GM12878 (cell line): ENCODE measurements at regions of chr4 and their contacts with region 1.

Region 1: GRCh38 chr4:10730590-10730989 is 46.0 kb upstream of the CLNK start:
- DNase-seq: peak; percentile 76
- ATAC-seq: peak; percentile 70
- H3K4me3 ChIP-seq: 0 out of 2 replicates have a peak overlapping the region, but pooled peaks have one; percentile 46
- H3K27ac ChIP-seq: peak overlapping the region; percentile 89
- H3K4me1 ChIP-seq: peaks cover 61% of the 10 kb centered on the region
- H3K27me3 ChIP-seq: no peaks in the 10 kb centered on the region
- CTCF ChIP-seq: no peak
- EP300 ChIP-seq: peak; percentile 82 to 93
- POLR2A ChIP-seq: no peak
- RAD21 ChIP-seq: 0 out of 2 replicates have a peak, but pooled peaks have one; percentile 20

Region 2: DNA sequence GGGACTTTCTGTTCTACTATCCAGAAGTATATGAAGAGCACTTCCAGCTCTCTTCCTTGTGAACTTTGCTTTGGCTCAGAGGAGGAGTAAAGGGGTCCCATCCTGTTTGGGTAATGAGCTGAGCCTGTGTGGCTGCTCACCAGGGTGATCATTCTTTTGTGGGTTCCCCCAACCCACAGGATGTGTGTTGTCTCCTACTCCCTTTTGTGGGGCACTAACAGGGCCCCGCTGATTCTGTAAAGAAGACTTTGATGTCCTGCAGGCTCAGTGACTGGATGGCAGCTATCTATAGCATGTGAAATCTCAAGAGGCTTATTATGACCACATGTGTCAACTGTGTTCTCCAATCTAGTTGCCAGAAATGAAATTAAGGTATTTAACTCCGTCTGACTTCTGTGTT is 314.1 kb before region 1 on chr4:
- CTCF ChIA-PET with region 1: no interaction called
- POLR2A ChIA-PET with region 1: no interaction called
- RAD21 ChIA-PET with region 1: no interaction called
- SMC1A ChIA-PET with region 1: no interaction called
- in situ Hi-C with region 1: no loop called
- intact Hi-C with region 1: no loop called
- DNase-seq: no peak
- ATAC-seq: peak; percentile 30; the same call in 2 of the 3 replicates
- H3K4me3 ChIP-seq: no peak overlapping the region
- H3K27ac ChIP-seq: no peak overlapping the region
- H3K4me1 ChIP-seq: no peaks in the 10 kb centered on the region
- H3K27me3 ChIP-seq: no peaks in the 10 kb centered on the region
- CTCF ChIP-seq: no peak
- EP300 ChIP-seq: no peak
- POLR2A ChIP-seq: no peak
- RAD21 ChIP-seq: no peak

Region 3: GRCh38 chr4:10582059-10582686 is 148.4 kb before region 1 on chr4:
- CTCF ChIA-PET with region 1: no interaction called
- POLR2A ChIA-PET with region 1: no interaction called
- RAD21 ChIA-PET with region 1: interaction called, 5 read pairs
- SMC1A ChIA-PET with region 1: no interaction called
- in situ Hi-C with region 1: no loop called
- intact Hi-C with region 1: loop called (anchors 1 kb)
- DNase-seq: no peak
- ATAC-seq: peak; percentile 62; the same call in 2 of the 3 replicates
- H3K4me3 ChIP-seq: no peak overlapping the region
- H3K27ac ChIP-seq: no peak overlapping the region
- H3K4me1 ChIP-seq: peaks cover 21% of the 10 kb centered on the region
- H3K27me3 ChIP-seq: no peaks in the 10 kb centered on the region
- CTCF ChIP-seq: peak; percentile 79 to 91 (median 83)
- EP300 ChIP-seq: no peak
- POLR2A ChIP-seq: no peak
- RAD21 ChIP-seq: peak; percentile 97

Region 4: GRCh38 chr4:10671366-10671765 is 59.2 kb before region 1 on chr4:
- CTCF ChIA-PET with region 1: no interaction called
- POLR2A ChIA-PET with region 1: interaction called, 10 read pairs
- RAD21 ChIA-PET with region 1: interaction called, 9 read pairs
- SMC1A ChIA-PET with region 1: interaction called, 10 read pairs
- in situ Hi-C with region 1: no loop called
- intact Hi-C with region 1: loop called (anchors 5 kb)
- DNase-seq: peak; percentile 92
- ATAC-seq: peak; percentile 84
- H3K4me3 ChIP-seq: no peak overlapping the region
- H3K27ac ChIP-seq: peak overlapping the region; percentile 57
- H3K4me1 ChIP-seq: peaks cover 29% of the 10 kb centered on the region
- H3K27me3 ChIP-seq: no peaks in the 10 kb centered on the region
- CTCF ChIP-seq: no peak
- EP300 ChIP-seq: no peak; a peak in 1 of 4 replicates
- POLR2A ChIP-seq: no peak
- RAD21 ChIP-seq: peak; percentile 24; the same call in 1 of the 2 replicates

Region 5: DNA sequence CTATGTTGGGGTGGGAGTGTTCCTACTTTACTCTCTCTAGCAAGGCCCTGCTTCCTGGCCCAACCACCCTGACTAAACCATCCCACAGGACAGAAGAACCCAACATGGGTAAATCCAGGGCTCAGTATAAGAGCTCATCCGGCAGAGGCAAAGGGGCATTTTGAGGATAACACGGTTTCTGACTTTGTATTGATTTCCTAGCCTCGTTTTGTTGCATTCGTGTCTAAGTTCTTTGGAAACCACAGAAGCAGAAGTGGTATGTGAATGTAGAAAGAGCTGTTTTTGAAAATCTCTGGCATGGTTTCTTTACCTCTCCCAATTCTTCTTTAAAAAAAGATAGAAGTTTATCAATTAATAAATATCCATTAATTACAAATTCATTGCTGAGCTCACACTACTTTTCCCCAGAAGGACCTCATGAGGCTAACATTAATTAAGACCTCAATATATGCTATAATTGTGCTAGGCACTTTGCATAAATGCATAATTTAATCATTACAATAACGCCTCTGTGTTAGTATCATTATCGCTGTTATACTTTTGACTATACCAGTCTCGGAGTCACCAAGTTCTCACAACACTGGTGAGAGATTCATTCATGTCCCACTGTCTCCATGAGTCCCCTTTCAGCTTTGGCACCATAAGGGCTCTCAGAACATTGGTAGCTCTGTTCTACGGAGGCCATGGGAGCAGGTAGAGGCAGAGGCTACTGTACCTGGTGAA is 40.2 kb before region 1 on chr4:
- CTCF ChIA-PET with region 1: interaction called, 5 read pairs
- POLR2A ChIA-PET with region 1: interaction called, 4 read pairs
- RAD21 ChIA-PET with region 1: interaction called, 13 read pairs
- SMC1A ChIA-PET with region 1: interaction called, 37 read pairs
- in situ Hi-C with region 1: no loop called
- intact Hi-C with region 1: loop called (anchors 1 kb)
- DNase-seq: no peak
- ATAC-seq: peak; percentile 52
- H3K4me3 ChIP-seq: no peak overlapping the region
- H3K27ac ChIP-seq: peak overlapping the region; percentile 71
- H3K4me1 ChIP-seq: peaks cover 35% of the 10 kb centered on the region
- H3K27me3 ChIP-seq: no peaks in the 10 kb centered on the region
- CTCF ChIP-seq: no peak
- EP300 ChIP-seq: no peak
- POLR2A ChIP-seq: no peak
- RAD21 ChIP-seq: no peak

Region 6: DNA sequence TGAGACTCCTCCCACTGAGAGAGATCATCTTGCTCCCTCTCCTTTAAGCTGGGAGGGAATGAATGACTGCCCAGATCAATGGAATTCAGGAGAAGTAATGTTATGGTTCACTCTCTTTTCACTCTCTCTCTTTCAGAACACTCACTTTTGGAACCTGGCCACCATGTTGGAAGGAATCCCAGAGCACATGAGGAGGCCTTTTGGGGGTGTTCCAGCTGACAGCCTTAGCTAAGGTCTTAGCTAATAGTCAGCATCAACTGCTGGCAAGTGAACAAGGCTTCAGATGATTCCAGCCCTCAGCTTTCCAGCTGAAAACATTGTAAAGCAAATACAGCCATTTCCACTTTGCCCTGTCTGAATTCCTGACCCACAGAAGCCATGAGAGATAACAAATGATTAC is 78.0 kb after region 1 on chr4:
- CTCF ChIA-PET with region 1: interaction called, 3 read pairs
- POLR2A ChIA-PET with region 1: no interaction called
- RAD21 ChIA-PET with region 1: no interaction called
- SMC1A ChIA-PET with region 1: interaction called, 3 read pairs
- in situ Hi-C with region 1: no loop called
- intact Hi-C with region 1: loop called (anchors 2 kb)
- DNase-seq: no peak
- ATAC-seq: no peak
- H3K4me3 ChIP-seq: no peak overlapping the region
- H3K27ac ChIP-seq: no peak overlapping the region
- H3K4me1 ChIP-seq: peaks cover 4% of the 10 kb centered on the region
- H3K27me3 ChIP-seq: no peaks in the 10 kb centered on the region
- CTCF ChIP-seq: no peak
- EP300 ChIP-seq: no peak
- POLR2A ChIP-seq: no peak
- RAD21 ChIP-seq: no peak

Region 7: DNA sequence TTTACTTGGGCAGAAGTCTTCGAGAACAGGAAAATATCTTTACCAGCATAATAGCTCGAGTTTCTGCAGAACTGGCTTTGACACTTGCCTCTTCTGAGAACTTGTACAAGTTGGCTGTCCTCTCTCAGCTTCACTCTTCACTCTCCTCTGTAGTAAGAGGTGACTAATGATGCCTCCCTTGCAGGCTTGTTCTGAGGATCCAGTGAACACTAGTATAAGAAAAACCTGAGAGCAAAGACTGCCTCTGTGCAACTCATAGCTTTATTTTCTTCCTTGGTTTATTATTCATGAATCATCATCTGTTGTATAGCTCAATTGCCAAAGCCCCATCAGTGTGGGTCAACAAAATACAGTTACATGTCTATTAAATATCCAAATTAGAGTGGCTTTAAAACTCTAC is 220.7 kb after region 1 on chr4:
- CTCF ChIA-PET with region 1: interaction called, 3 read pairs
- POLR2A ChIA-PET with region 1: no interaction called
- RAD21 ChIA-PET with region 1: no interaction called
- SMC1A ChIA-PET with region 1: interaction called, 8 read pairs
- in situ Hi-C with region 1: no loop called
- intact Hi-C with region 1: loop called (anchors 5 kb)
- DNase-seq: no peak
- ATAC-seq: no peak
- H3K4me3 ChIP-seq: no peak overlapping the region
- H3K27ac ChIP-seq: no peak overlapping the region
- H3K4me1 ChIP-seq: peaks cover 15% of the 10 kb centered on the region
- H3K27me3 ChIP-seq: no peaks in the 10 kb centered on the region
- CTCF ChIP-seq: no peak
- EP300 ChIP-seq: no peak
- POLR2A ChIP-seq: no peak
- RAD21 ChIP-seq: no peak